Activated CD4-positive, alpha-beta T cell treated with anti-CD3 and anti-CD28 coated beads, Interleukin-2, amount 10 ng/mL, durations not matched to agents 24 days and 14 days (primary cell): ENCODE measurements at regions of chr16 and their contacts with region 1.

Region 1: DNA sequence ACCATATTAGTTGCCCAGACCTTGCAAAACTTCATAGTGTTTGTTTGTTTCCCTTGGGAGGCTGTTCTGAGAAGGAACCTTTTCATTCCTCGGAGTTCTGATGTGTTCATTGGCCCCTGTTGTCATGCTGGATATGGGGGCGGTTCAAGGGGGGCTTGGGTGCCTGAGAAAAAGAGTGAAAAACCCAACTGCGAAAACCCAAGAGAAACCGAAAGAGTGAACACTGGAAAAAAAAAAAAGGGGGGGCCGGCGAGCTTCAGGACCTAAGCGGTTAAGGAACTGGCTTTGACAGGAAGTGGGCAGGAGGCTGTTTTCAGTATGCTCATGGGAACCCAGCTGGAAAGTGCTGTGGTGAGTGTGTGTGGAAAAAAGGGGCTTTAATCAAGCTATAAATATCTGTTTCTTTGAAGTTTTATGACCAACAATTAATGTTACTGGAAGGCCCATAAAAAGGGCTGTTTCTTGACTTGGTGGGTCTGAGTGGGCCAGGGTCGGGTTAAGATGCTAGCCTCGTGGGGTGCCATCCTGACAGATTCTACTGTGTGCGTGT is 510.7 kb downstream of the MAF start:
- DNase-seq: peak; percentile 91
- H3K4me3 Mint-ChIP-seq: peak overlapping the region; percentile 75
- H3K27ac Mint-ChIP-seq: peak overlapping the region; percentile 94
- H3K4me1 Mint-ChIP-seq: peaks cover 49% of the 10 kb centered on the region
- H3K27me3 Mint-ChIP-seq: peaks cover 5% of the 10 kb centered on the region

Region 2: GRCh38 chr16:78896280-78896679 is 193.5 kb before region 1 on chr16:
- intact Hi-C with region 1: loop called (anchors 5 kb)
- DNase-seq: no peak
- H3K4me3 Mint-ChIP-seq: no peak overlapping the region
- H3K27ac Mint-ChIP-seq: peak overlapping the region; percentile 56
- H3K4me1 Mint-ChIP-seq: peaks cover 33% of the 10 kb centered on the region
- H3K27me3 Mint-ChIP-seq: peaks cover 2% of the 10 kb centered on the region

Region 3: GRCh38 chr16:79163691-79164387 is 74.0 kb after region 1 on chr16:
- intact Hi-C with region 1: loop called (anchors 5 kb)
- DNase-seq: peak; percentile 70
- H3K4me3 Mint-ChIP-seq: peak overlapping the region; percentile 57
- H3K27ac Mint-ChIP-seq: peak overlapping the region; percentile 14
- H3K4me1 Mint-ChIP-seq: peaks cover 14% of the 10 kb centered on the region
- H3K27me3 Mint-ChIP-seq: no peaks in the 10 kb centered on the region

Region 4: DNA sequence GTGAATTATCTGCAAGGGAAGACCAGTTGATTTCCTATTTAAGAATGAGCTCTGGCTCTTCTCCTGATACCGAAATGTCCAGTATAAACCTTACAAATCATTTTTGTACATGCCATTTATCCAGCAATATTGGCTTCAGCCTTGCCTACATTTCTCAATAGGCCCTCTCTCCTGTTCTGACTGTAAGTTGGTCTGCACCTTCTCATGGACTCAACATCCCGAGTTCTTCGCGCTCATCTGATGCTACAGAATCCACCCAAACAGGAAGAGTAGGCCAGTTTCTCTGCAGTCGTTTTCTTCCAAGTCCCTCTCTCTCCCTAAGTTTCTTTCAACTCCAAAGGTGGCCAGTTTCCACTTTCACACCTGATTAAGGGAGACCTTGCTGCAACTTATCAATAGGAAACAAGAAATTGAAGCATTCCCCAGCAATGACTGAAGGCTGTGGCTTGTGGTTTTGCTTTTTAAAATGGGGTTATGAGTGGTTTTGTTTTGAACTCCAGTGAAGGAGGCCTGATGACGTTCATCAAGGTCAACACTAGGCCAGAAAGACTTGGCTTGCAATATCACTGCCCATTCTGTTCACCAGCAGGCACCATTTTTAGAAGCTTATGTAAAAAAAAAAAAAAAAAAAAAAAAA is 127.7 kb after region 1 on chr16:
- intact Hi-C with region 1: loop called (anchors 2 kb)
- DNase-seq: peak; percentile 80
- H3K4me3 Mint-ChIP-seq: peak overlapping the region; percentile 4
- H3K27ac Mint-ChIP-seq: peak overlapping the region; percentile 50
- H3K4me1 Mint-ChIP-seq: peaks cover 22% of the 10 kb centered on the region
- H3K27me3 Mint-ChIP-seq: peaks cover 7% of the 10 kb centered on the region

Region 5: DNA sequence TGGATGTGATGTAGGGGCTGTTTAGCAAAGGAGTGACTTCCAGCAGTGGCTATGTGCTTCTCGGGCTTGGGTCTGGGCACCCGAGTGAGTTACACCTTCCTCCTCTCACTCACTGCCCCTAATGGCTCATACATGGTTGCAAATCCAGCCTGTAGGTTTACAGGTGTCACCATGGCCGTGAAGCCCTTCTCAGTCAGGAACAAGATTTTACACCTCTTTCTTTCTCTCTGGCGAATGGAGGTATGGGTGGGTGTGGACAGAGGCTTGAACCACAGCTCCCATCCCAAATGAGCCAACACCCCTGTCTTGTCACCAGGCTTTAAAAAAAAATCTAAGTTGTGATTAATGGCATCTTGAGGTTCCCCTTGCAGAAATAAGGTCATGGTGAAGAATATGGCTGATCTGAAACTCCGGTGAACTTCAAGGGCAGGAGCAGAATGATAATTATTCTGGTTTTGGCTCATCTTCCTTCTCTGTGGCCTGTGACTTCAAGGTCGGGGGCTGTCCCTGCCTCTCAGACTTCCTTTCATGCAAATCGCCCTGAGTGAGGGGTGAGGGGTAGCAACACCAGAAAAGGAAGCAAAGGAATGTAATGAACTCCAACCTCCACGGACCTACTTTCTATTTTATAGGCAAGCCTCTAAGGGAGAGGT is 179.5 kb after region 1 on chr16:
- intact Hi-C with region 1: loop called (anchors 2 kb)
- DNase-seq: peak; percentile 88
- H3K4me3 Mint-ChIP-seq: peak overlapping the region; percentile 56
- H3K27ac Mint-ChIP-seq: peak overlapping the region; percentile 86
- H3K4me1 Mint-ChIP-seq: peaks cover 74% of the 10 kb centered on the region
- H3K27me3 Mint-ChIP-seq: peaks cover 9% of the 10 kb centered on the region

Region 6: GRCh38 chr16:79770244-79771064 is 680.6 kb after region 1 on chr16:
- intact Hi-C with region 1: loop called (anchors 10 kb)
- DNase-seq: peak; percentile 93
- H3K4me3 Mint-ChIP-seq: peak overlapping the region; percentile 97
- H3K27ac Mint-ChIP-seq: peak overlapping the region; percentile 90
- H3K4me1 Mint-ChIP-seq: peaks cover 32% of the 10 kb centered on the region
- H3K27me3 Mint-ChIP-seq: peaks cover 26% of the 10 kb centered on the region